Sciatic nerve (tissue), 2 donors: ENCODE measurements at regions of chr12 and their contacts with region 1.

Region 1: GRCh38 chr12:131642101-131642540 is 68.8 kb upstream of the SFSWAP start:
- DNase-seq: no peak
- ATAC-seq: no peak

Region 2: DNA sequence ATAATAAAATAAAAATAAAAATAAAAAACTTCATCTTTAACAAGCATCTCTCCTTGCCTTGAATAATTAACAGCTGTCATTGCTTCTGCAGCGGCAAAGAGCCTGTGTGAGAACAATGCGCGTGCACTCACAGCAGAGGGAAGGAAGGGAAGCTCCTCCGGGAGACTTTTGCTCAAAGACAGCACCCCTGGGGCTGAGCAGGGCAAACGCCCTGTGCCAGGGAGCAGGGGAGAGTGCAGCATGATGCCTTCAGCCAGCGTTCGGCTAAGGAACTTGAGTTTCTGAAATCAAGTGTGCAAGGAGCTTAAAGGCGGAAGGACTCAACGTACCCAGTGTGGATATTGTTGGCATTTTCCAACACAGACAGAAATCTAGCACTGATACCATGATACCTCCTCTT is 1046.6 kb before region 1 on chr12:
- intact Hi-C with region 1: loop called (anchors 5 kb)
- DNase-seq: no peak
- ATAC-seq: no peak

Region 3: DNA sequence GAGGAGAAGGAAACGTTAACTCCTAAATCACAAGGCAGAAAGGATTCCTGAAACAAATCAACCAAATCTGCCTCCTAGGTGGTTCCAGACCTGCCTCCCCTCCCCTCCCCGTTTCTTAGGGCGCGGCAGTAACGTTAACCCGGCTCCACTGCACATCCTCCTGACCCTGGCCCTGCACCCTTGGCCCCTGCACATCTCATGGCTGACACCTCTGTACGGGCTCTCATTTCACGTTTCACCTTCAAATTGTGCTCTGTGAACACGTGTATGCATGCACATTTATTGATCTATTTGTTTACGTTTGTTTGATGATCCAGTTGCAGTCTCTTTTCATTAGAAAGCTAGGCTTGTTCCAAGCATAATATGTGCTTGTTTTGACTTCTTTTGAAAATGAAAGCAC is 330.4 kb before region 1 on chr12:
- intact Hi-C with region 1: loop called (anchors 5 kb)
- DNase-seq: peak; percentile 31
- ATAC-seq: no peak